ENCODE measurements at regions of chr4 and their contacts with region 1.

Region 1: GRCh38 chr4:26076000-26076587 is 162.1 kb downstream of the SMIM20 start:
- DNase-seq: peak; percentile 74
- ATAC-seq: peak; percentile 80
- H3K4me3 Mint-ChIP-seq: peak overlapping the region; percentile 22
- H3K27ac Mint-ChIP-seq: peak overlapping the region; percentile 62
- H3K4me1 Mint-ChIP-seq: peaks cover 45% of the 10 kb centered on the region
- H3K27me3 Mint-ChIP-seq: no peaks in the 10 kb centered on the region

Region 2: GRCh38 chr4:25834411-25835107 is 241.5 kb before region 1 on chr4:
- CTCF ChIA-PET with region 1: no interaction called
- POLR2A ChIA-PET with region 1: no interaction called
- DNase-seq: no peak
- ATAC-seq: no peak
- H3K4me3 Mint-ChIP-seq: no peak overlapping the region
- H3K27ac Mint-ChIP-seq: no peak overlapping the region
- H3K4me1 Mint-ChIP-seq: no peaks in the 10 kb centered on the region
- H3K27me3 Mint-ChIP-seq: no peaks in the 10 kb centered on the region

Region 3: GRCh38 chr4:26088433-26088928 is 12.4 kb after region 1 on chr4:
- CTCF ChIA-PET with region 1: interaction called, 14 read pairs
- POLR2A ChIA-PET with region 1: interaction called, 3 read pairs
- DNase-seq: peak; percentile 35
- ATAC-seq: peak; percentile 51
- H3K4me3 Mint-ChIP-seq: no peak overlapping the region
- H3K27ac Mint-ChIP-seq: peak overlapping the region; percentile 37
- H3K4me1 Mint-ChIP-seq: peaks cover 37% of the 10 kb centered on the region
- H3K27me3 Mint-ChIP-seq: no peaks in the 10 kb centered on the region

Region 4: DNA sequence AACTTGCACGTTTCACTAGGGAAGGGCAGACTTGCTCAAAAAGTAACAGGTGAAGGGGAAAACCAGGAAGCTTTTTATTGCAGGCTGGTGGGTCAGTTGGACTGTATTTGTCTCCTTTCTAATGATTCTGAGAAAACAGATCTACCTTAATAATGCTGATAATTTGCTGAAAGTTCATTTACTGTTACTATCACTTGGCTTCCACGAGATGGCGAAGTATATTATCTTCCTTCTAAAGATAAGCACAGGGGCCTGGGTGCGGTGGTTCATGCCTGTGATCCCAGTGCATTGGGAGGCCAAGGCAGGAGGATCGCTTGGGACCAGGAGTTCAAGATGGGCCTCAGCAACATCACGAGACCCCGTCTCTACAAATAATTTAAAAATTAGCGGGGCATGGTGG is 397.8 kb after region 1 on chr4:
- CTCF ChIA-PET with region 1: no interaction called
- POLR2A ChIA-PET with region 1: no interaction called
- DNase-seq: no peak
- ATAC-seq: no peak
- H3K4me3 Mint-ChIP-seq: no peak overlapping the region
- H3K27ac Mint-ChIP-seq: no peak overlapping the region
- H3K4me1 Mint-ChIP-seq: no peaks in the 10 kb centered on the region
- H3K27me3 Mint-ChIP-seq: peaks cover 6% of the 10 kb centered on the region